ENCODE measurements at regions of chr1 and their contacts with region 1.

Region 1: GRCh38 chr1:2545759-2546514 is 10.2 kb upstream of the TNFRSF14 start:
- DNase-seq: peak; percentile 95
- ATAC-seq: peak; percentile 52
- H3K4me3 Mint-ChIP-seq: peak overlapping the region; percentile 82
- H3K27ac Mint-ChIP-seq: peak overlapping the region; percentile 98
- H3K4me1 Mint-ChIP-seq: peaks cover 19% of the 10 kb centered on the region
- H3K27me3 Mint-ChIP-seq: peaks cover 13% of the 10 kb centered on the region

Region 2: DNA sequence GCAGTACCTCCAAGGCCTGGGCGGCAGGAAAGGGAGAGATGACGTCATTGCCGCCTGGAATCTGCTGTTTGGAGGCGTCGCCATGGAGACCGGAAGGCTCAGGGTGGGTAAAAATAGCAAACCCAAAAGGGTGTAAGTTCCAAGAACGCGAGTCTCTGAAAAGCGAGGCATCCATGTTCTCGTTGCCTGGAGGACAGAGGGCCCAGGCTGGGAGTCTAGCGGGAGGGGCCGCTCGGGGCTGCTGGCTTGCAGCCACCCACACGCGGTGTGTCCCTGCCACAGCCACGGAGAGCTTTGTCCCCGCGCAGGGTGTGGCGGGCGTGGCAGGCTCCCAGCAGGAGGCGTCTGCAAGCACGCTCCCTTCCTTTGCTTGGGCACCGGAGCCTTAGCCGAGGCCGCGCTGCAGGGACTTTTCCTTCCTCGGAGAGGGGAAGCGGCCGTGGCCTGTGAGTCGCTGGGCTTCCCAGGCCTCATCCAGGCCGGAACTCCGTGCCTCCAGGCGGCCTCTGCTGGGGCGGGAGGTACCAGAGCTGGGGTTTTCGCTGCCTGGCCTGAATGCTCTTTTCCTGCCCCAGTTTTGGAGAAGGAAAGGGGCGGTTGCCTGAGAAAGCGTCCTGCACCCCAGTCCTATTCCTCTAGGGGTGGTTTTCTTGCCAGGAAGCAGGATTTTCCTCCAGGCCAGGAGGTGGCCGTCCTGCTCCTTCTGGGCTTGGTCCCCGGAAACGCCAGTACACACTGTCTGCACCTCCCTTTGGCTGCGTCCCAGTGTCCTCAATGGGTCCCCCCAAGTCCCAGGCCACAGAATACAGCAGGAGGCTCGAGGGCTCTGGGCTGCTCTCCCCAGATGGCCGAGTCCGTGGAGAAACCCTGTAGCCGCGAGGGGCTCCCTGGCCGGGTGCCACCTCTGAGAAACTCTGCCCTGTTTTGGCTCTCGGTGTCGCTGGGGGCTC is 333.1 kb before region 1 on chr1:
- CTCF ChIA-PET with region 1: no interaction called
- DNase-seq: peak; percentile 81
- ATAC-seq: peak; percentile 73
- H3K4me3 Mint-ChIP-seq: no peak overlapping the region
- H3K27ac Mint-ChIP-seq: peak overlapping the region; percentile 49
- H3K4me1 Mint-ChIP-seq: peaks cover 8% of the 10 kb centered on the region
- H3K27me3 Mint-ChIP-seq: no peaks in the 10 kb centered on the region

Region 3: DNA sequence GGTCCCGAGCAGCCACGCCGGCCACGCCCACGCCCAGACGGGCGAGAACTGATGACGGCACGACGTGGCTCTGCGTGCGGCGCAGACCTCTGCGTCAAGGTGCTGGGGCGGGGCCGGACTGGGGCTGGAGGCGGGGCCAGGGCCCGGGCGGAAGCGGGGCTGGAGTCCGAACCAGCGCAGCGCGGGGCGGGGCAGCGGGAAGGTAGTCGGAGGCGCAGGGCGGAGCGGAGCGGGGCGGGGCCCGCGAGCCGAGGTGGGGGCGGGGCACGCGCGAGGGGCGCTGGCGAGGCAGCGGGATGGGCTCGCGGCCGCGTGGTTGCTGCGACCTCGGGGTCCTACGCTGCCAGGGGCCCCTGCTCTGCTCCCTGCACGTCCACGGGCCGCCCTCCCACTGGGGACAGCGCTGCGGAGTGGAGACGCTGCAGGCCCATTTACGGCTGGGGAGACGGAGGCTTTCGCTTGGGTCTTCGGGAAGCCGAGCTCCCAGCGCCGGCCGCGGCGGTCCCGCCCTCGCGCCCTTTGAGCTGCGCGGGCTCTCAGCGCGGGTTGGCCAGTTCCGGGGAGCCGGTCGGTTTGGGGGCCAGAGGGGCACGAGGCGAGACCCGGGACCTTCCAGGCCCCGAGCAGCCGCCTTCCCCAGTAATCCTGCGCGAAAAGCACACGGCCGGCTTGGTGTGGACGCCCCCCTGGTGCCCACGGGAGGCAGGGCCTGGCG is 133.3 kb before region 1 on chr1 and contains the start of gene PEX10:
- CTCF ChIA-PET with region 1: interaction called, 69 read pairs
- DNase-seq: peak; percentile 99
- ATAC-seq: peak; percentile 88
- H3K4me3 Mint-ChIP-seq: peak within 1 kb of the TSS; percentile 81
- H3K27ac Mint-ChIP-seq: peak within 1 kb of the TSS; percentile 95
- H3K4me1 Mint-ChIP-seq: peaks cover 43% of the 10 kb centered on the region
- H3K27me3 Mint-ChIP-seq: no peaks in the 10 kb centered on the region
- total RNA-seq, gene PEX10: 8.7 to 12.3 TPM

Region 4: DNA sequence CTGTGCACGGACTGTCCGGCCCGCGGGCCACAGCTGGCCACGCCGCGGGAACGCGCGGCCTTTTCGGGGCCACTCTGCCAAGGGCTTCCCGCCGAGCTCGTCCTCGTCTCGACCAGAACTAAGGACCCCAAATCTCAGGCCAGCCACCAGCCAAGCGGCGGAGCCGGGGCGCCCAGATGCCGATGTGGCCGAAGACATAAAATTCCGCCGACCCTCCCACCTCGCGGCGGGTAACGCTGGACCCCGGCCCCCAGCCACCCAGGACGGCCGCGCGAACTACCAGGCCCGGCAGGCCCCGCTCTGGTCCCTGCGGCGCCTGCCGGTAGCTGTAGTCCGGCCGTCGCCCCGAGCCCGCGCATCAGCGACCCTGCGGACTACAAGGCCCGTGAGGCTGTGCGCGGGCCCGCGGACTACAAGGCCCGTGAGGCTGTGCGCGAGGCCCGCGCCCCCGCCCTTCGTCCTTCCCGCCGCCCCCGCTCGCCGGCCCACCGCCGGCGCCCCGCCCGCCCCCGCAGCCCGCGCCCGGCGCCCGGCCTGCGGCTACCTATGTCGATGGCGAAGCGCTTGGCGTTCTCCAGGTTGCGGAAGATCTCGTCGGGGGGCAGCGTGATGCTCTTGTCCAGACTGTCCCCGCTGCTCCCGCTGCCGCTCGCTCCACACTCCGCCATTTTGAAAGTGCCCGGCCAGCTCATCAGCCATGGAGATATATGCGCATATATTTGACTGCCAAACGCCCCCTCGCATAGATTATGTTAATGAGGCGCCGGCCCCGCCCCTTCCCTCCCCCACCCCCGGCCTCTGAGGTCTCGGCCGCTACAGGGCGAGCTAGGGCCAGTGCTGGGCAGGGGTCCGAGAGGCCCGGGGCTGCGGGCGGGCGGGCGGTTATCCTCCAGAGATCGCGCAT is 19.8 kb before region 1 on chr1 and contains the start of gene PANK4:
- CTCF ChIA-PET with region 1: interaction called, 95 read pairs
- DNase-seq: peak; percentile 94
- ATAC-seq: peak; percentile 88
- H3K4me3 Mint-ChIP-seq: peak within 1 kb of the TSS; percentile 73
- H3K27ac Mint-ChIP-seq: peak within 1 kb of the TSS; percentile 88
- H3K4me1 Mint-ChIP-seq: peaks cover 39% of the 10 kb centered on the region
- H3K27me3 Mint-ChIP-seq: peaks cover 15% of the 10 kb centered on the region
- total RNA-seq, gene PANK4: 72.2 to 91.2 TPM

Region 5: DNA sequence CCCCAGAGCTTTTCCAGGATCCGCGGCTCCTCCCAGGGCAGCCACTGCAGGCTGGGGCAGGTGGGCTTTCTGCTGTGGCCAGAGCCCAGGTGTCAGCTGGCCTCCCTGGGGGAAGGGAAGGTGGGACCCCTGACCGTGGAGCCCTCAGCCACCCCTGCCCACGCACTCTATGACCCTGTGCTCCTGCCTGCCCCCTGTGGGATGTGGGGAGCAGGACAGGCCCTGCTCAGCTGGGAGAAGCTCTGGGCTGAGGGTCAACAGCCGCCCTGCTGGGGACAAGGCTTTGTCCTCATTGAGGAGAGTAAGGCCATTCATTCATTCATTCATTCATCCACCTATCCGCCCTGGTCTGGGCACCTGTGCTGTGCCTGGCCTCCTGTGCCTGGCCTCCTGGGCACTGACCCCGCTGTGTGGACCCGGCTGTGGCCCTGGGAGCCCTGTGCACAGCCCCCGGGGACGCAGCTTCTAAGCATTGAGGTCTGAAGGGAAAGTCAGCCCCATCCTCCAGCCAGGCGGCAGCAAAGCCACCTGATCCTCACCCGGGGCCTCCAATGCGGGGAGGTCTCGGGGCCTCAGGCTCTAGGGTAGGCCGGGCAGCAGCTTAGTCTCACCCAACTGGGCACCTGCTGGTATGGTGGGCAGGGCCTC is 16.1 kb after region 1 on chr1:
- CTCF ChIA-PET with region 1: interaction called, 15 read pairs
- DNase-seq: no peak
- ATAC-seq: no peak
- H3K4me3 Mint-ChIP-seq: no peak overlapping the region
- H3K27ac Mint-ChIP-seq: no peak overlapping the region
- H3K4me1 Mint-ChIP-seq: peaks cover 15% of the 10 kb centered on the region
- H3K27me3 Mint-ChIP-seq: no peaks in the 10 kb centered on the region

Region 6: GRCh38 chr1:2586154-2587070 is 40.5 kb after region 1 on chr1 and contains the start of gene PRXL2B:
- CTCF ChIA-PET with region 1: interaction called, 38 read pairs
- DNase-seq: peak; percentile 99
- ATAC-seq: peak; percentile 82
- H3K4me3 Mint-ChIP-seq: peak within 1 kb of the TSS; percentile 82
- H3K27ac Mint-ChIP-seq: peak within 1 kb of the TSS; percentile 93
- H3K4me1 Mint-ChIP-seq: peaks cover 35% of the 10 kb centered on the region
- H3K27me3 Mint-ChIP-seq: no peaks in the 10 kb centered on the region
- total RNA-seq, gene PRXL2B: 22.4 to 26.2 TPM